ENCODE measurements at regions of chrX and their contacts with region 1.

Region 1: GRCh38 chrX:143615851-143616250 is 20.1 kb downstream of the SLITRK4 start:
- DNase-seq: no peak
- ATAC-seq: no peak
- H3K4me3 ChIP-seq: no peak overlapping the region
- H3K27ac ChIP-seq: no peak overlapping the region
- H3K4me1 ChIP-seq: no peaks in the 10 kb centered on the region
- H3K27me3 ChIP-seq: no peaks in the 10 kb centered on the region
- CTCF ChIP-seq: no peak

Region 2: DNA sequence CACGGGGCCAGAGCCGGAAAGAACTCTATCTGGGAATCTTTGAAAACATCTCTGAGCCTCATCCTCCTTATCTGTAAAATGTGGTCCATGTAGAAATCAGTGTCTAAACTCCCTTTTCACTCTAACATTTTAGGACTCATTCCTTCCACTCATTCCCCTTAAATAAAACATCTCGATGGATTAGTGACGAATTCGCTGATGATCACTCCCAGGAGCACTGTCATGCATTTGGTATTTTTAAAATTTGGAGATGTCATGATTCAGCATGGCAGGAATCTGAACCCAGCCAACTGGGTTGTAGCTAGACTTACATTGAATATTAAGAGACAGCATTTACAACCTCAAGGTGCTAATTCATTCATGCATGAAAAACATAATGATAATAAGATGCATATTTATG is 186.7 kb before region 1 on chrX:
- CTCF ChIA-PET with region 1: interaction called, 10 read pairs
- POLR2A ChIA-PET with region 1: no interaction called
- in situ Hi-C with region 1: no loop called
- intact Hi-C with region 1: no loop called
- DNase-seq: no peak
- ATAC-seq: no peak
- H3K4me3 ChIP-seq: no peak overlapping the region
- H3K27ac ChIP-seq: no peak overlapping the region
- H3K4me1 ChIP-seq: no peaks in the 10 kb centered on the region
- H3K27me3 ChIP-seq: no peaks in the 10 kb centered on the region
- CTCF ChIP-seq: no peak

Measured in Panc1 (cell line).